HCT116 (cell line): ENCODE measurements at regions of chr7 and their contacts with region 1.

Region 1: GRCh38 chr7:27210441-27211083 is 10.7 kb upstream of the HOXA13 start:
- DNase-seq: no peak
- ATAC-seq: peak; percentile 95
- H3K4me3 ChIP-seq: peak overlapping the region; percentile 28 to 43
- H3K27ac ChIP-seq: no peak overlapping the region
- H3K4me1 ChIP-seq: peaks cover 4 to 14% of the 10 kb centered on the region in 2 experiments; a peak in 3 of 4 replicates
- H3K27me3 ChIP-seq: no peaks in the 10 kb centered on the region
- CTCF ChIP-seq: peak; percentile 75 to 80 (median 78)
- POLR2A ChIP-seq: no peak
- RAD21 ChIP-seq: peak; percentile 80

Region 2: DNA sequence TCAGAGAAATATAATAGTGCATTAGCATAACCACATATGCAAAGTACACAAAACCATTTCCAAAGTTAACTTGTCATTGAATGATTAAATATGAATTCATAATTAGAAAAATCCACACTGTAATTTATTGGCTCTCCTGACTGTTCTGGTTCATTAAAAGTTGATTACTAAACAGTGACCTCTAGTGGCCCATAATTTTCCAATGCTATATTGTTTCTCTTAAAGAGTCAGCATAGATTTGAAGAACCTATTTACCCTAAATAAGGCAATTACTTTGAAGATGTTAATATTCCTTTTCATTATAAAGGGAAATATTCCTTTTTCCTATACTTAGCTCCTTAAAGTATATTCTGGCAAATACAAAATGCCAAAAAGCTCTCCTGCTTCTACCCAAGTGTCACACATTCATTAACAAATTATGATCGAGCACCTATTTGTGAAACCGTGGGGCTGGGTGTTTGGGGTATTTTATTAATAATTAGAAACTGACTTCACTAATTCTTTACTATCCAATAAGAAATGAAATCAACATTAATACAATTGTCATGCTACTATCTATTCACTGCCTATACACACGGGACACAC is 365.9 kb after region 1 on chr7:
- CTCF ChIA-PET with region 1: no interaction called
- POLR2A ChIA-PET with region 1: no interaction called
- RAD21 ChIA-PET with region 1: no interaction called
- intact Hi-C with region 1: loop called (anchors 1 kb)
- DNase-seq: peak; percentile 29
- ATAC-seq: peak; percentile 64
- H3K4me3 ChIP-seq: no peak overlapping the region
- H3K27ac ChIP-seq: no peak overlapping the region
- H3K4me1 ChIP-seq: no peaks in the 10 kb centered on the region
- H3K27me3 ChIP-seq: no peaks in the 10 kb centered on the region
- CTCF ChIP-seq: peak; percentile 37 to 75 (median 60); a peak in 4 of 6 replicates
- POLR2A ChIP-seq: no peak
- RAD21 ChIP-seq: peak; percentile 70

Region 3: GRCh38 chr7:28002638-28003037 is 792.1 kb after region 1 on chr7:
- CTCF ChIA-PET with region 1: no interaction called
- POLR2A ChIA-PET with region 1: no interaction called
- RAD21 ChIA-PET with region 1: no interaction called
- intact Hi-C with region 1: no loop called
- DNase-seq: no peak
- ATAC-seq: peak; percentile 75
- H3K4me3 ChIP-seq: no peak overlapping the region
- H3K27ac ChIP-seq: no peak overlapping the region
- H3K4me1 ChIP-seq: 0 out of 4 replicates have a peak, but pooled peaks cover 0 to 2% of the 10 kb centered on the region in 2 experiments
- H3K27me3 ChIP-seq: no peaks in the 10 kb centered on the region
- CTCF ChIP-seq: no peak
- POLR2A ChIP-seq: no peak
- RAD21 ChIP-seq: no peak